Gastrocnemius medialis (tissue), 4 donors: ENCODE measurements at regions of chr10 and their contacts with region 1.

Region 1: DNA sequence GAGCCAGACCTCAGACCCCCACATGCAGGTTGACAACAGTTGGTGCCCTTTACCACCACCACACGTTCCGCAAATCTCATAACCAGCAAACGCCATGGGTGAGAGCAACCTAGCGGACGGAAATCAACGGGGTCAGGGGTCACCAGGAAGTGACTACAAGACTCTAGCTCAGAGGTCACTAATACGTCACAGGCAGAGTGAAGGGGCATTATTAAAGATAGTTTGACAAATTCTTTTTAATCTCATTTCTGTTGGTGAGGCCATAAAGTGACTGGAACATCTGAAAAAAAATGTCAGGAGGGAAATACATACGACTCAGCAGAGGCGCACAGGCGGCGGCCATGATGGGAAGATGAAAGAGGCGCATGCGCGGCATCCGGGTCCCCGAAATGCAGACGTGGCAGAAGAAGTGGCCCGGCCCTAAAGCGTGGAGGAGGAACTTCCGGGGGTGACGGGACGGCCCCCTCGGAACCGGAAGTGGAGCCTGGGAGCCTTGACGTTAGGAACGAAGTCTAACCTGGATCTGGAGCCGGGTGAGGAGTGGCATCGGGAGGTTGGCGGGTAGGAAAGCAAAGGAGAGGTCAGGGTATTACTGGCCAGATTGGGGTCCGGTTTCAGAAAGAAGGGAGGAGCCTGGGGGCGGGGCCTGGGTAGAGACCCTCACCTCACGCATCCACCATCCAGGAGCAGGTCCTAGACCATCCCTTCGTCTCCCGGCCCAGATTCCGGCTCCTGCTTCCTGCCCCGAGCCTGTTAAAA is at the start of gene SEC24C:
- DNase-seq: peak; percentile 94 to 95
- ATAC-seq: peak; percentile 96 to 97
- H3K4me3 ChIP-seq: peak within 1 kb of the TSS; percentile 74 to 93 (median 86)
- H3K27ac ChIP-seq: peak within 1 kb of the TSS; percentile 85 to 96 (median 90)
- H3K4me1 ChIP-seq: peaks cover 34 to 37% of the 10 kb centered on the region in 2 donors
- H3K27me3 ChIP-seq: no peaks in the 10 kb centered on the region
- CTCF ChIP-seq: peak in 1 of 5 experiments; percentile 16
- POLR2A ChIP-seq: peak; percentile 45 to 51
- total RNA-seq, gene SEC24C: 43.6 to 90.5 (median 69.6) TPM

Region 2: GRCh38 chr10:73730153-73730906 is 13.8 kb before region 1 on chr10:
- in situ Hi-C with region 1: no loop called
- intact Hi-C with region 1: loop called (anchors 1 kb)
- DNase-seq: peak; percentile 86 to 91
- ATAC-seq: peak; percentile 96 to 97
- H3K4me3 ChIP-seq: peak overlapping the region; percentile 59 to 89 (median 82)
- H3K27ac ChIP-seq: peak overlapping the region; percentile 92 to 96 (median 93)
- H3K4me1 ChIP-seq: peaks cover 28 to 29% of the 10 kb centered on the region in 2 donors
- H3K27me3 ChIP-seq: no peaks in the 10 kb centered on the region
- CTCF ChIP-seq: no peak
- POLR2A ChIP-seq: peak; percentile 72 to 85

Region 3: DNA sequence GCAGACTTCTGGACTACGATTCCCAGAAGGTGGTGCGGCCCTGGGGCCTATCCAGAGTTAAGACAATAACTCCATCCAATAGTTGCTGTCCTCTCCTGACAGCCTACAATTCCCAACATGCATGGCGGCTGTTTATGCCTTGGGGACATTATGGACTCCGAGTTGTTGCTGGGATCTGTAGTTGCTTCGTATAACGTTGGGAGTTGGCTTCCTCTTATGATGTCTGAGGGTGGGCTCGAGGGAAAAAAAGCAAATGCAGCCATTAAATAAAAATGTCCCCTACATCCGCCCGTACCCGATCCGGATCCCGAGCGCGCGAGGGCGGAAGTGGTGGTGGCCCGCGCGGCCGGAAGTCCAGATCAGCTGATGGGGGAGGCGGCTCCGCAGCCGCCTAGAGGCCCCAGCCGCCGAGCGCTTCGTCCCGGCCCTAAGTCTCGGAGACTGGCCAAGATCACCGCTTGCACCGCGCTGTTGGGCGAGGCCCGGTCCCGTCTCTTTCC is 41.2 kb after region 1 on chr10 and contains the start of gene ZSWIM8:
- in situ Hi-C with region 1: no loop called
- intact Hi-C with region 1: loop called (anchors 2 kb)
- DNase-seq: peak; percentile 89 to 91
- ATAC-seq: peak; percentile 93 to 94
- H3K4me3 ChIP-seq: peak within 1 kb of the TSS; percentile 73 to 93 (median 86)
- H3K27ac ChIP-seq: peak within 1 kb of the TSS; percentile 80 to 95 (median 90)
- H3K4me1 ChIP-seq: peaks cover 53 to 62% of the 10 kb centered on the region in 2 donors
- H3K27me3 ChIP-seq: no peaks in the 10 kb centered on the region
- CTCF ChIP-seq: peak in 1 of 5 experiments; percentile 25
- POLR2A ChIP-seq: peak; percentile 85 to 92
- total RNA-seq, gene ZSWIM8: 52.6 to 81.4 (median 78.9) TPM